ENCODE measurements at regions of chr17 and their contacts with region 1.

Region 1: DNA sequence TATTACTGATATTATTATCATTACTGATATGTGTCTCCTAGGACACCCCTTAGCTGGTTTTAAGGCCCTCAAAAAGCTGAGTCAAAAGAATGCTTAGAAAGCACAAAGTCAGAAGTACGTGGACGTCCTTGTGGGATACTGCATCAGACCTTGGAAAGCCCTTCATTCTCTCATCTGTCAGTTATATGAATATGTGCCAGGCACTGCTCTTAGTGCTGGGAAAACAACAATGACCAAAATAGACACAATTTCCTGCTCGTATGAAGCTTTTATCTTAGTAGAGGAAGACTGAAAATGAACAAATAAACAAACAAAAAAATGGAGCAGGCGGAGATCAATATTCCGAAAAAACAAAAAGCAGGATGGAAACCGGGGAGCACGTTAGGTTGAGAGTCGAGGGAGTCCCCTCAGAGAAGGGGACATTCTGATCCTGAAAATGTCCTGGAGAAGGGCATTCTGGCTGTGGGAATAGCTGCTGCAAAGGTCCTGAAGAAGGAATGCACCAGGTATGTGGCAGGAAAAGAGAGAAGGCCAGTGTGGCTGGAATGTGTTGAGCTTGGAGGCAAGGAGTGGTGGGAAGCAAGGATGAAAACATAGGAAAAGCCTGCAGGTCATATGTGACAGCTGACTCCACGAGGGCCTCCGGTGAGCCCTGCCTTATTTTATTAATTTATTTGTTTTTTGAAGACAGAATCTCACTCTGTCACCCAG is 15.5 kb upstream of the TMEM94 start:
- DNase-seq: peak in 1 of 2 donors; percentile 23
- ATAC-seq: peak in 7 of 8 donors; percentile 35 to 77 (median 67)
- H3K4me3 ChIP-seq: no peak overlapping the region
- H3K27ac ChIP-seq: peak overlapping the region in 9 of 10 donors; percentile 48 to 87 (median 76)
- H3K4me1 ChIP-seq: peaks cover 0 to 43% (median 30%) of the 10 kb centered on the region in 9 donors
- H3K27me3 ChIP-seq: no peaks in the 10 kb centered on the region
- CTCF ChIP-seq: no peak

Region 2: GRCh38 chr17:75476271-75476671 is 35.4 kb after region 1 on chr17:
- intact Hi-C with region 1: loop called in 1 of 10 experiments (anchors 5 kb)
- DNase-seq: no peak
- ATAC-seq: peak; percentile 60 to 85 (median 76)
- H3K4me3 ChIP-seq: peak overlapping the region in 8 of 10 donors; percentile 8 to 44 (median 34)
- H3K27ac ChIP-seq: peak overlapping the region; percentile 57 to 90 (median 81)
- H3K4me1 ChIP-seq: peaks cover 28 to 80% (median 45%) of the 10 kb centered on the region in 9 donors
- H3K27me3 ChIP-seq: no peaks in the 10 kb centered on the region
- CTCF ChIP-seq: no peak

Region 3: GRCh38 chr17:75487351-75488070 is 46.6 kb after region 1 on chr17:
- intact Hi-C with region 1: no loop called
- DNase-seq: peak in 1 of 2 donors; percentile 36
- ATAC-seq: peak in 7 of 8 donors; percentile 27 to 60 (median 43)
- H3K4me3 ChIP-seq: peak overlapping the region in 1 of 10 donors; percentile 3
- H3K27ac ChIP-seq: peak overlapping the region in 8 of 10 donors; percentile 0 to 81 (median 60)
- H3K4me1 ChIP-seq: peaks cover 18 to 65% (median 51%) of the 10 kb centered on the region in 9 donors
- H3K27me3 ChIP-seq: no peaks in the 10 kb centered on the region
- CTCF ChIP-seq: no peak

Measured in heart right ventricle (tissue), 16 donors.